RWPE1 (cell line): ENCODE measurements at regions of chr4 and their contacts with region 1.

Region 1: GRCh38 chr4:68175562-68176155 is 46.0 kb upstream of the TMPRSS11F start:
- DNase-seq: peak; percentile 53
- H3K27ac ChIP-seq: no peak overlapping the region
- CTCF ChIP-seq: peak; percentile 72

Region 2: GRCh38 chr4:67983333-67983732 is 192.3 kb before region 1 on chr4:
- CTCF ChIA-PET with region 1: interaction called, 11 read pairs
- POLR2A ChIA-PET with region 1: no interaction called
- DNase-seq: peak; percentile 66
- H3K27ac ChIP-seq: no peak overlapping the region
- CTCF ChIP-seq: no peak

Region 3: GRCh38 chr4:68310651-68311247 is 135.1 kb after region 1 on chr4:
- CTCF ChIA-PET with region 1: no interaction called
- POLR2A ChIA-PET with region 1: no interaction called
- DNase-seq: no peak
- H3K27ac ChIP-seq: no peak overlapping the region
- CTCF ChIP-seq: no peak

Region 4: GRCh38 chr4:68773699-68774098 is 598.0 kb after region 1 on chr4:
- CTCF ChIA-PET with region 1: no interaction called
- POLR2A ChIA-PET with region 1: no interaction called
- DNase-seq: no peak
- H3K27ac ChIP-seq: no peak overlapping the region
- CTCF ChIP-seq: no peak